HEK293T (cell line): ENCODE measurements at regions of chr6 and their contacts with region 1.

Region 1: DNA sequence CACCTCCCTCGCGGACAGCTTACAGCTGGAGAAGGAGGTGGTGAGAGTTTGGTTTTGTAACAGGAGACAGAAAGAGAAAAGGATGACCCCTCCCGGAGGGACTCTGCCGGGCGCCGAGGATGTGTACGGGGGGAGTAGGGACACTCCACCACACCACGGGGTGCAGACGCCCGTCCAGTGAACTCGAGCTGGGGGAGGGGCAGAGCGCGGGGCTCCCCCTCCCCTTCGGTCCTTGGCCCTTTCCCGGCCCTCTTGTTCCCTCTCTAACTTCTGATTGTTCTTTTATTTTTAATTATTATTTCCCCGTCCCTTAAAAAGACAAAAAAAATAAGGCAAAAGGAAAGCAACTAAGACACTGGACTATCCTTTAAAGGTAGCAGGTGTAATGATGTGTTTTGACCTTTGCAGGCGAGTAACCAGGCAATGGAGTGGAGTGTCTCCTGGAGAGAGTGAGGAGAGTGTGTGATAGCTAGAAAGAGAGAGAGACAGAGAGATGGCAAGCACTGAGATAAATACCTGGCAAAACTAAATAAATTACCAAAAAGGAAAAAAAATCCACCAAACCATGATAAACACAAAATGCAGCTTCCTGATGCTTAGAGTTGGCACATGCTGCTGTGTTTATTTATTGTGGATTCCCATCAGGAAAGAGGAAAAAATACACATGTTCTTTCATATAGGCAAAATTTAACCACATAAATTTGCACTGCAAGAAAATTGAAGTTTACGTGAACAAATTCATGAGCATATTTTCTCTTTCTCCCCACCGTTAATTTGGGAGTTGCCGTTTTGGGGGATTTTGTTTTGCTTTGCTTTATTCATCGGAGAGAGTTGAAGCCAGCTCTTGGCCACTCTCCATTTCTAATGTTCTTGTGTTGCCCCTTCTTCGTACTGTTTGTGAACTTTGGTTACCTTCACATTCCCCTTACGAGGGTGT is 1.9 kb downstream of the POU3F2 start:
- DNase-seq: no peak

Region 2: DNA sequence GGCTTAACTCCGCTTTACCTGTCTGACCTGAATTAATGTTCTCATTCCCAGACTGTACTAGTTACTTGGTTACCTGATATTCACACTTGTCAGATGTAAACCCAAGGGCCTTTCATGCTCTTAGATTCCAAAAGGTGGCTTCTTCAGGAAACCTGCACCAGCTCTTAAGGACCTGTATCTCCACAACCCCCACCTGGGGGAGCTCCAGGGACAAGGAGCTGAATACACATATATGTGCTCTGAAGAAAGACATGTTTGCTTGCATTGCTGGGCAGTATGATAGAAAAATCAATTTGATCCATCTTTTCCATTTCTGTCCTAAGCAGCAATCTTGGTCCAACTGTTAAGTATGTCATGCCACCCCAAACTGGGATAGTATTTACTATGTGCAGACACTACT is 66.7 kb before region 1 on chr6:
- CTCF ChIA-PET with region 1: interaction called, 15 read pairs
- POLR2A ChIA-PET with region 1: no interaction called
- DNase-seq: peak; percentile 48